Activated T-helper 1 cell treated with anti-CD3 and anti-CD28 coated beads, Interleukin-12 subunit alpha, Interleukin-12 subunit beta, Interleukin-2, Interleukin-4 antibody, amounts not matched to agents 30 ng/mL and 10 ng/mL and 1 ng/mL, durations not matched to agents 14 hours and 24 hours and 36 hours (primary cell): ENCODE measurements at regions of chr6 and their contacts with region 1.

Region 1: DNA sequence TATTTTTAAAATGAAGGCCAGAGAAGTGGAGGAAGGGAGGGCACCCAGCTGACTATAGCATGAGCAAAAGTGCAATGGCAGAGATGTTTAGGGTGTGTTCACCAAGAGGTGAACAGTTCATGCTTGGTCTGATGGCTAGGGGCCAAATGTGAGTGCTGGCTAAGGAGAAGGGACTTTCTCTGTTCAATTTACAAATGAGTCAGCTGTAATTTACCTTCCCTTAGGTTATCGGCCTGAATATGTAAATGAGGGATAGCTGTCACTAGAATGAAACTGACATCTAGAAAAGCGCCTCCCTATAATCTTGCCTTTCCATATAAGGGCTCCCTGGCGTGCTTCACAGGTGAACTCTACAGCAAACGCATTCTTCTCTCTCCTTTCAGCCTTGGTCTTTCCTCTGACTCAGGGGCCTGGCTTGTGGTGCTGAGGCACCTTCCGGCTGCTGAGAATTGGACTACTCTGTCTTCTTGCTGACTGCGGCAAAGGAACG is 114.7 kb upstream of the BACH2 start:
- DNase-seq: peak; percentile 59
- H3K4me3 Mint-ChIP-seq: no peak overlapping the region
- H3K27ac Mint-ChIP-seq: peak overlapping the region; percentile 75
- H3K4me1 Mint-ChIP-seq: peaks cover 81% of the 10 kb centered on the region
- H3K27me3 Mint-ChIP-seq: no peaks in the 10 kb centered on the region

Region 2: DNA sequence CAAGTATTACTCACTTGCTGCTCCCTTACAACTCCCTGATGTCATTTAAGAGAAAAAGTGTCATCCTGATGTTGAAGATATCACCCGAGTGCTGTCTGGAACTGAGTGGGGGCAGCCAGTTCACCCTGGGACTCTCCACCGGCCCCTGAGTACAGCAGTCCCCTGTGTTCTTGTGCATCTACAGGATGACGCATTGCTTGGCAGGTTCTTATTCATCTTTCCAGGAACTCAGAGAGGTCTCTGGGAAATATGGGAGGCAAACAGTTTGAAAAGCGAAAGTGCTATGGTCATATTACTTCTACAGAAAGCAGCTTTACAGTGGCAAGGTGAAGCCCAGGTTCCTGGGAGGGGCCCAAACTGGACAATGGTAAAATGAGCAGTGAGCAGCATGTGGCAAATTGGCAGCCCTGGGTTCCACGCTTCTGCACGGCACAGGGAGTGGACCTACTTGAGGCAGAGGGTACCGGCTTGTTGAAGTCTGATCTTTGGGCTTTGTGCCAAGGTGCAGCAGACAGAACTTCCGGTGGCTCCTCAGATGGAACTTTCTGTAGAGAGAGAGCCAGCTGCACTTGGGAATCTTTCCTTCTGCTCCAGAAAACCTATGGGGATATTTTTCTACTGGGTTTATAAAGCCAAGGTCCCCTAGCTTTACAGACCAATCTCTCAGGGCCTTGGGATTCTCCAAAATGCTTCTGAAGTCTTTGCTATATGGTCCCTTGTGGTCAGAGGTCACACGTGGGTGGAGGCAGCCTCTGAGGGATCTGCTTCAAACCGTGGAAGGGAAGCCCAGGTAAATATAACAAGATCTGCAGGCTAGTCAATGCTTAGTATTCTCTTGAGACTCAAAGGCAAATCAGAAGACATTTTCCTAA is 47.3 kb after region 1 on chr6:
- intact Hi-C with region 1: loop called (anchors 1 kb)
- DNase-seq: peak; percentile 66
- H3K4me3 Mint-ChIP-seq: peak overlapping the region; percentile 47
- H3K27ac Mint-ChIP-seq: peak overlapping the region; percentile 93
- H3K4me1 Mint-ChIP-seq: peaks cover 65% of the 10 kb centered on the region
- H3K27me3 Mint-ChIP-seq: no peaks in the 10 kb centered on the region

Region 3: DNA sequence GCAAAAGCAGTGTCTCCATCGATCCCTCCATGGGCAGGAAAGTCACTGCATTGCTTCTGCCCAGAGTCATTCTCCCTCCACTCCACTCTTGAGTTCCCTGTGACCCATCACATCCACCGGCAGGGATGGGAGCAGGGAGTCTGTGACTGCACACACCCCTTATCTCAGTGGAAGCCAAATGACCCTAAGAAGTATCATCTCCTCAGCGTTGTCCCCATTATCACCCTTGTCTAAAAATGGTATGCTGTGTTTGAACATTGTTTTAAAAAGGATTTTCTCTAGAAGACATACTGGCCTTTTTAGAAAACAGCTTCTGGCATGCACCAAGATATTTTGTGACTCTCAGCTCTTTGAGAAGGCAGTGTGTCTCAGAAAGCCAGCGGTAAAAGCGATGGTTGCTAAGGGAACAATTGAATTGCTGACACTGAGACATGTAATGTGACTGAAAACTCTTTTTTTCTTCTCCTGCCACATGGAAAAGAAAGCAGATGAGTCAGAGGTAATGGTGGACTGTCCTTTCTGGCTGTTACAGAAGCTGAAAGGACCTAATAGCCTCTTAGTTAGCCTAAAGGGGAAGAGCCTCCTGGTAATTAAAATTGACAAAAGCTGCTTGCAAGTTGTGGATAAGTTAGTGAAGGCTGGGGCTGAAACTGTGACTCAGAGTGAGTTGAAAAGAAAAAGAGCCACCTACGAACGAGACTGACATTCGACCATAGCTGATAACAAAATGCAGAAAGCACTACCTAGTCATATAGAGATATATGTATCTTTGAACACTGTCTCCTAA is 55.0 kb after region 1 on chr6:
- intact Hi-C with region 1: loop called (anchors 1 kb)
- DNase-seq: no peak
- H3K4me3 Mint-ChIP-seq: peak overlapping the region; percentile 61
- H3K27ac Mint-ChIP-seq: peak overlapping the region; percentile 92
- H3K4me1 Mint-ChIP-seq: peaks cover 93% of the 10 kb centered on the region
- H3K27me3 Mint-ChIP-seq: no peaks in the 10 kb centered on the region

Region 4: GRCh38 chr6:90502866-90503407 is 91.6 kb after region 1 on chr6:
- intact Hi-C with region 1: no loop called
- DNase-seq: no peak
- H3K4me3 Mint-ChIP-seq: no peak overlapping the region
- H3K27ac Mint-ChIP-seq: no peak overlapping the region
- H3K4me1 Mint-ChIP-seq: peaks cover 9% of the 10 kb centered on the region
- H3K27me3 Mint-ChIP-seq: peaks cover 4% of the 10 kb centered on the region

Region 5: GRCh38 chr6:90860822-90861601 is 449.7 kb after region 1 on chr6:
- intact Hi-C with region 1: no loop called
- DNase-seq: no peak
- H3K4me3 Mint-ChIP-seq: no peak overlapping the region
- H3K27ac Mint-ChIP-seq: no peak overlapping the region
- H3K4me1 Mint-ChIP-seq: peaks cover 6% of the 10 kb centered on the region
- H3K27me3 Mint-ChIP-seq: peaks cover 3% of the 10 kb centered on the region